ENCODE measurements at regions of chr1 and their contacts with region 1.

Region 1: GRCh38 chr1:63917571-63918417 is 144.0 kb downstream of the ROR1 start:
- DNase-seq: no peak
- ATAC-seq: no peak

Region 2: DNA sequence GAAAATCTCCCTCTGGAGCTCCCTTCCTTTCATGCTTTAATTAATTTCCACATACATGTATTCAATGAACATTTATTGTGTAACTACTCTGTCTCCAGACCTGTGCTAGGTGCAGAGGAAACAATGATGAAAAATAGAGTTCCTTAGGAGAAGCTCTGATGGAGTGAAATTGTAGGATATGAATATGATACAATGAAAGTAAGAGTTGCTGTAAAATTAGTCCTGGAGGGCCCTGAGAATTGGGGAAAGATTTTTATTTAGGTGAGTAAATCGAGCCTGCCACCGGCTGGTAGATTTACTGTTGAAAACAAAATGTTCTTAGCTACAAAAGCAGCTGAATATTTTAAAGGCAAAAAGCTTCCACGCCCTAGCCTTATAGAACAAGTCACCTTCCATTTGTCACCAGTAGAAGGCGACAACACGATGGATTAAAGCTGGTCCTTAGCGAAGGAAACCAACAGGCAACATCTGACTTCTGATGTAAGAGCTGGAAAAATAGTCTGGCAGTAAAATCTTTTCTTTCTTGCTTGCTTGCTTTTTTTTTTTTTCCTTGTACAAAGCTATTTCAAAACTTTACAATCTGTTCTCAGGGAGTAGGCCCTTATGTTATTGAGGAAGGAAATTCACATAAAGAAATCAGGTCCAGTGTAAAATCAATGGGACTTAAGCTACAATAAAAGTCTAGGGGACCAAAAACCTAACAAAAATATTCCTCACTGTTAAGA is 225.9 kb before region 1 on chr1:
- intact Hi-C with region 1: loop called in 1 of 2 experiments (anchors 10 kb)
- DNase-seq: peak; percentile 37
- ATAC-seq: peak; percentile 83 to 90

Region 3: GRCh38 chr1:63773815-63774616 is 143.8 kb before region 1 on chr1 and contains the start of gene ROR1:
- intact Hi-C with region 1: loop called in 1 of 2 experiments (anchors 5 kb)
- DNase-seq: peak; percentile 88
- ATAC-seq: peak; percentile 97
- total RNA-seq, gene ROR1: 5.7 to 14.7 TPM

Region 4: GRCh38 chr1:63779338-63780211 is 138.2 kb before region 1 on chr1:
- intact Hi-C with region 1: loop called (anchors 5 to 10 kb)
- DNase-seq: no peak
- ATAC-seq: peak in 1 of 2 donors; percentile 34

Region 5: GRCh38 chr1:63799820-63800219 is 118.0 kb before region 1 on chr1:
- intact Hi-C with region 1: no loop called
- DNase-seq: no peak
- ATAC-seq: no peak

Region 6: DNA sequence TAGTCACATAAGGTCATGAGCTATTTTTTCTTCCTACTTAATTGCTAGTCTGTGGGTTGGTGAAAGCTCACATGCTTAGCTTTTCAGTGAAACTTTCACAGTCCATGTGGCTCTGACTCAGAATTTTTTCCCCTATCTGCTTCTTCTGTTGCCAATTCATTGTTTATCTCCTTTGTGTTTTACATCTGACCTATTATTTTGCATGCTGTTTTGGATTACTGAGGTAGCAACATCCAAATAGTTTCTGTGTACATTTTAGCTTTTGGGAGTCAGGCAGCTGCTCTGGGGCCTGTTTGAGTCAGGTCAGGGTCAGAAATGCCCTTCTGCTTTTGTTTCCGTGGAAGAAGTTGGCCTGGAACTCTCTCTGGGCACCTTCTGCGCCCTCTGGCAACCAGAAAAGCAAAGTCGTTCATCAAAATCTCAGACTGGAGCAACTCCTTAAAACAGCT is 103.9 kb before region 1 on chr1:
- intact Hi-C with region 1: no loop called
- DNase-seq: no peak
- ATAC-seq: peak in 1 of 2 donors; percentile 50

Region 7: GRCh38 chr1:64282354-64282753 is 364.6 kb after region 1 on chr1:
- intact Hi-C with region 1: no loop called
- DNase-seq: no peak
- ATAC-seq: no peak